ENCODE measurements at regions of chr7 and their contacts with region 1.

Region 1: DNA sequence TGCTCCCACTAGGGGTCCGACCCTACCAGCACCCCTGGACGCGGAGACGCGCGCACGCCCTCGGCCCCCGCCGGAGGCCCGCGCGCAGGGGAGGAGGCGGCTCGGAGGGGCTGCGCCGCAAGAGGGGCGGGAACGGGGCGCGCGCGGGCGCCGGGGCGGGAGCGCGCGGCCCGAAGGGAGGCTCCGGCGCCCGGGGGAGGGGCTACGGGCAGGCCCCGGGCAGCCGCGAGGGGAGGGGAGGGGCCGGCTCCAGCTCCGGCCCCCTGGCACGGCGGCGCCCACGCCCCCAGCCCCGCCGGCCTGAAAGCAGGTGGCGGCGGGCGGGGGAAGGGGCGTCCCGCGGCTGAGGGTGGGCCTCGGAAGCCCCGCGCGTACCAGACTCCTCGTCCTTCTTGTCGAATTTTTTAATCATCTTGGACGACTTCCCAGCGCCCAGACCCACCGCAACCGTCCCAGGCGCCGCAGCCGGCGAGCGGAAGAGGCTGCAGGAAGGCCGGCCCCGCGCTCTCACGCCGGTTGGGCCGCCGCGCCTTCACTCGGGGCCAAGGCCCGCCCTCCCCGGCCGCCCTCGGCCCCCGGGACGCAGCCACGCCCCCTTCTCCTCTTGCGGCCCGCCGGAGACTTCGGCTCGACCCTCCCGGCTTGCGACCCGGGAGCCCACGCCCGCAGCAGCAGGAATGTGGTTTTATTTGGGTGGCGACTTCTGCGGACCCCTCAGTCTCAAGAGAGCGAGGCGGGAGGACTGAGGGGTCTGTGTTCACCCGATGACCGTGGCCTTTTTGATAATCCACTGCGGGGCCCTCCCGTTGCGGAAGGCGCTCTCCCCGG is at the start of gene COPG2:
- DNase-seq: peak; percentile 94
- ATAC-seq: peak; percentile 99
- total RNA-seq, gene COPG2: 17.9 TPM

Region 2: GRCh38 chr7:130515315-130516040 is 153.0 kb before region 1 on chr7:
- intact Hi-C with region 1: loop called (anchors 10 kb)
- DNase-seq: no peak
- ATAC-seq: no peak

Region 3: GRCh38 chr7:130566168-130566897 is 102.1 kb before region 1 on chr7:
- intact Hi-C with region 1: loop called (anchors 2 kb)
- DNase-seq: peak; percentile 86
- ATAC-seq: peak; percentile 98

Measured in Right ventricle myocardium inferior (tissue), 1 donor.